Aorta (tissue), 5 donors: ENCODE measurements at regions of chr17 and their contacts with region 1.

Region 1: GRCh38 chr17:35088881-35089585 is 25.5 kb upstream of the RFFL start:
- DNase-seq: peak; percentile 90 to 96
- ATAC-seq: peak; percentile 98
- H3K4me3 ChIP-seq: peak overlapping the region; percentile 82 to 90
- H3K27ac ChIP-seq: peak overlapping the region in 1 of 2 donors; percentile 82
- H3K4me1 ChIP-seq: no peaks in the 10 kb centered on the region
- H3K27me3 ChIP-seq: no peaks in the 10 kb centered on the region

Region 2: GRCh38 chr17:34961093-34961911 is 127.7 kb before region 1 on chr17 and contains the starts of genes CCT6B and ZNF830:
- intact Hi-C with region 1: loop called (anchors 2 to 5 kb)
- DNase-seq: peak; percentile 95 to 96
- ATAC-seq: peak; percentile 98
- H3K4me3 ChIP-seq: peak within 1 kb of the TSS; percentile 75 to 78
- H3K27ac ChIP-seq: peak within 1 kb of the TSS; percentile 69 to 98
- H3K4me1 ChIP-seq: peaks cover 3 to 6% of the 10 kb centered on the region in 2 donors
- H3K27me3 ChIP-seq: no peaks in the 10 kb centered on the region
- total RNA-seq, gene CCT6B: 1.9 to 2.4 TPM
- total RNA-seq, gene ZNF830: 12.9 to 14.5 TPM

Region 3: DNA sequence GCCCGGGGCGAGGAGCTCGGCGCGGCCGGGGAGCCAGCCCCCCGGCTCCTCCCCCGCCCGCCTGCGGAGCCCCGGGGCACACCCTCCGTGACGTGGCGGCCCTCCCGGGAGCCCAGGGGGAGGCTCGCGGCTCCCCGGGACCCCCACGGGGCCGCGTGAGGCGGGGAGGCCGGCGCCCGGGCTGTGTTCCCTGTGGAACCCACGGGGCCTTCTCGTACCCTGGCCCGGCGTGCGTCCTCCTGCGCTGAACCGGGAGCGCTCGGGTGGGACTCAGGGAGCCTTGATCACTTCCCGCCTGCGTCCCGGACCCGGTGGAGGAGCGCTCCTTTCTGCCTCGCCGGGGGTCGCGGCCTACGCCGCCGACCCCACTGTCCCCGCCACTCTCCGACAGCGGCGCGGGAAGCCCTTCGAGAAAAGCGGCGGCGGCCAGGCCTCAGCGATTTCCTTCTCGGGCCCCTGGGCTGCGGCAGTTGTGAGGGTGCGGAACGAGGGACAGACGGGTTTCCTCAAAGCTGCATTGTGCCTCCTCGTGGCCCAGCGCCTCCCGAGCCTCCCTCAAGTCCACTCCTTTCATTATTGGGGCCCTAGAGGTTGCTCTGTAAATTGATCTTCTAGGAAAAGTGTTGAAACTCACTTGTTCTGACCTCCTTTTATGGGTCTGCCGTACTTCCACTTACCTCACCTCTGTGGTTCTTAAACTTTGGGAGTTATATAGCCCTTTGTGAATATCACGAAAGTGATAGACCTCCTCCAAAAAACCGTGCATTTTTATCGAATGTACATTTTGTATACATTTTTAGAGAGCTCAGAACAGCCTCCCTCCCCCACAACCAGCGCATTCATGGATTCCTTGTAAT is 108.1 kb before region 1 on chr17:
- intact Hi-C with region 1: loop called in 1 of 2 experiments (anchors 5 kb)
- DNase-seq: peak; percentile 85 to 93
- ATAC-seq: peak; percentile 95
- H3K4me3 ChIP-seq: peak overlapping the region; percentile 75 to 98
- H3K27ac ChIP-seq: peak overlapping the region; percentile 93 to 99
- H3K4me1 ChIP-seq: peaks cover 0 to 2% of the 10 kb centered on the region in 2 donors
- H3K27me3 ChIP-seq: no peaks in the 10 kb centered on the region

Region 4: GRCh38 chr17:35002876-35003518 is 86.0 kb before region 1 on chr17:
- intact Hi-C with region 1: loop called in 1 of 2 experiments (anchors 5 kb)
- DNase-seq: no peak
- ATAC-seq: no peak
- H3K4me3 ChIP-seq: no peak overlapping the region
- H3K27ac ChIP-seq: no peak overlapping the region
- H3K4me1 ChIP-seq: no peaks in the 10 kb centered on the region
- H3K27me3 ChIP-seq: no peaks in the 10 kb centered on the region

Region 5: DNA sequence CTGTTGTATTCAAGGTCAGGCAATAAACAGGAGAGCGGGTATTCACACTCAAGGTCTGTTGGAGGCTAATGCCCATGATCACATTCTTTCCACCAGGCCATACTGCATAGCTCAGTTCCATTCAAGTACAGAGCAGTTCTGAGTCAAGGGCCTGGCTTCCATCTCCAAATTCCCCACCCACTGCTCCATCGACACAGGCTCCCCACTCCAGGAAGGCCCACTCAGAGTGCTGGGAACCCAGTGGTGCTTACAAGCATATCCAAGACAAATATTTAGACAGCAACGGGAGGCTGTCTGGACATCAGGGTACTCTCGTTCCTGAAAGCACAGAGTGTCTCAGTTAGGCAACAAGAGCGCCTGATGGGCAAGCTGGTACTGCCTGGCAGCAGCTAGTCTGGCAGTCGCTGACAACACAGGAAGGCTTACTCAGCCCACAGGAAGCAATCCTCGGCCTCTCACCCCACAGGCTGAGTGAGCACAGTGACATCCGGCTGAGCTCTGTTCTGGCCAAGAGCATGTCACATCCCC is 66.4 kb before region 1 on chr17:
- intact Hi-C with region 1: loop called in 1 of 2 experiments (anchors 5 kb)
- DNase-seq: peak; percentile 91 to 92
- ATAC-seq: peak; percentile 92
- H3K4me3 ChIP-seq: no peak overlapping the region
- H3K27ac ChIP-seq: peak overlapping the region; percentile 46 to 85
- H3K4me1 ChIP-seq: peaks cover 2 to 4% of the 10 kb centered on the region in 2 donors
- H3K27me3 ChIP-seq: no peaks in the 10 kb centered on the region

Region 6: GRCh38 chr17:35119368-35120165 is 30.5 kb after region 1 on chr17 and contains the start of gene RAD51D:
- intact Hi-C with region 1: loop called in 1 of 2 experiments (anchors 2 kb)
- DNase-seq: peak; percentile 80 to 92
- ATAC-seq: peak; percentile 95
- H3K4me3 ChIP-seq: peak within 1 kb of the TSS; percentile 64 to 75
- H3K27ac ChIP-seq: no peak within 1 kb of the TSS
- H3K4me1 ChIP-seq: no peaks in the 10 kb centered on the region
- H3K27me3 ChIP-seq: no peaks in the 10 kb centered on the region
- total RNA-seq, gene RAD51D: 14.8 to 17.3 TPM